GM12878 (cell line): ENCODE measurements at regions of chr3 and their contacts with region 1.

Region 1: DNA sequence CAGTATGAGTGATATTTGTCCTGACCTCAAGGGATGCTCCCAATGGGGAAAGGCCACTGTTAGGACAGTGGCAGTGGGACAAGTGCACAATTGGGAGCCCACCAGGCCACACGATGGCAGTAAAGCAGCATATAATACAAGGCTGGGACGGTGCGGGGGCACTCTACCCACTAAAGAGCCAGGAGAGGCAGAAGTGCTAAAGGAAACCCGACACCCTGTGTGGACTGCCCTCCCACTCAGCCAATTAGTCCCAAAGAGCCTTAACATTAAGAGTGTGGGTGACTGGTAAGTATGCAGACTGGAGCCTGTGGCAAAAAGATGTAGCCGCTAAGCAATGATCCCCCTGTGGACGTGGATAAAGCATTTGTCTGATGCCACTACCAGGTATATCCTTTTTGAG is 8.2 kb upstream of the ZNF589 start:
- DNase-seq: peak; percentile 63
- ATAC-seq: peak; percentile 100
- H3K4me3 ChIP-seq: peak overlapping the region; percentile 6; the same call in 1 of the 2 replicates
- H3K27ac ChIP-seq: peak overlapping the region; percentile 24; the same call in 1 of the 2 replicates
- H3K4me1 ChIP-seq: peaks cover 39% of the 10 kb centered on the region
- H3K27me3 ChIP-seq: no peaks in the 10 kb centered on the region
- CTCF ChIP-seq: peak; percentile 63 to 90 (median 85)
- EP300 ChIP-seq: no peak
- POLR2A ChIP-seq: no peak
- RAD21 ChIP-seq: peak; percentile 68

Region 2: DNA sequence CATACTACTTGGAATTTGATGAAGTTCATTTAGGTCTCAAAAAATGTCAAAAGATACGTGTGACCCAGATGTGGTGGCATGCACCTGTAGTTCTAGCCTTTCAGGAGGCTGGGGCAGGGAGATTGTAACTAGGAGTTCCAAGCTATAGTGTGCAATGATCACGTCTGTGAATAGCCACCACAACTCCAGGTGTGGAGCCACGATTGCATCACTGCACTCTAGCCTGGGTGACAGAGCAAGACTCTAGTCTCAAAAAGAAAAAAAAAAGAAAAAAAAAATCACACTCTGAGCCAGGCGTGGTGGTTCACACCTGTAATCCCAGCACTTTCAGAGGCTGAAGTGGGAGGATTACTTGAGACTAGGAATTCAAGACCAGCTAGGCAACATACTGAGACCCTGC is 230.7 kb before region 1 on chr3:
- CTCF ChIA-PET with region 1: no interaction called
- POLR2A ChIA-PET with region 1: no interaction called
- RAD21 ChIA-PET with region 1: no interaction called
- SMC1A ChIA-PET with region 1: no interaction called
- in situ Hi-C with region 1: no loop called
- intact Hi-C with region 1: no loop called
- DNase-seq: no peak
- ATAC-seq: no peak
- H3K4me3 ChIP-seq: no peak overlapping the region
- H3K27ac ChIP-seq: no peak overlapping the region
- H3K4me1 ChIP-seq: no peaks in the 10 kb centered on the region
- H3K27me3 ChIP-seq: no peaks in the 10 kb centered on the region
- CTCF ChIP-seq: no peak
- EP300 ChIP-seq: no peak
- POLR2A ChIP-seq: no peak
- RAD21 ChIP-seq: no peak

Region 3: GRCh38 chr3:48188266-48189201 is 44.2 kb before region 1 on chr3 and contains the start of gene CDC25A:
- CTCF ChIA-PET with region 1: interaction called, 47 read pairs
- POLR2A ChIA-PET with region 1: no interaction called
- RAD21 ChIA-PET with region 1: interaction called, 6 read pairs
- SMC1A ChIA-PET with region 1: no interaction called
- in situ Hi-C with region 1: no loop called
- intact Hi-C with region 1: loop called (anchors 5 kb)
- DNase-seq: peak; percentile 97
- ATAC-seq: peak; percentile 98
- H3K4me3 ChIP-seq: peak within 1 kb of the TSS; percentile 92
- H3K27ac ChIP-seq: peak within 1 kb of the TSS; percentile 74
- H3K4me1 ChIP-seq: peaks cover 12% of the 10 kb centered on the region; the same call in 1 of the 2 replicates
- H3K27me3 ChIP-seq: no peaks in the 10 kb centered on the region
- CTCF ChIP-seq: no peak
- EP300 ChIP-seq: no peak
- POLR2A ChIP-seq: peak; percentile 82
- RAD21 ChIP-seq: no peak
- polyA plus RNA-seq, gene CDC25A: 2.9 to 5.6 TPM

Region 4: DNA sequence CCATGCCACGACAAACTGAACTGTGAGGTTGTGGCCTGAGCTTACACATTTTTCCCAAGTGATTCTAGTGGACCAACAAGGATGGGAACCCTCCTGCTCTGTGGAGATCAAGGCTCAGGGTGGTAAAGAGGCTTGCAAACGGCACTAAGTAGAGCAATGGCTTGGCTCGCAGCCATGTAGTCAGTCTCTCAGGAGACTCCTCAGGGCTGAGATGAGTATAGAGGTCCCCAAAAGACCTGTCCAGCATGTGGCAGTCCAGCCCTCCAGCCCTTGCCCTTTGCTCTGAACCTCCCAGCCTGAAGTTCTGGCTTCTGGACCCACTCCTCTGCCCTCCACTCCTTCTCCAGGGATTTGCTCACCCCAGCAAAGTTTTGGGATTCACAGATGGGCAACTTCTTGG is 17.7 kb before region 1 on chr3:
- CTCF ChIA-PET with region 1: no interaction called
- POLR2A ChIA-PET with region 1: no interaction called
- RAD21 ChIA-PET with region 1: no interaction called
- SMC1A ChIA-PET with region 1: no interaction called
- in situ Hi-C with region 1: no loop called
- intact Hi-C with region 1: no loop called
- DNase-seq: no peak
- ATAC-seq: no peak
- H3K4me3 ChIP-seq: no peak overlapping the region
- H3K27ac ChIP-seq: no peak overlapping the region
- H3K4me1 ChIP-seq: no peaks in the 10 kb centered on the region
- H3K27me3 ChIP-seq: no peaks in the 10 kb centered on the region; a peak in 1 of 4 replicates
- CTCF ChIP-seq: no peak
- EP300 ChIP-seq: no peak
- POLR2A ChIP-seq: no peak
- RAD21 ChIP-seq: no peak

Region 5: DNA sequence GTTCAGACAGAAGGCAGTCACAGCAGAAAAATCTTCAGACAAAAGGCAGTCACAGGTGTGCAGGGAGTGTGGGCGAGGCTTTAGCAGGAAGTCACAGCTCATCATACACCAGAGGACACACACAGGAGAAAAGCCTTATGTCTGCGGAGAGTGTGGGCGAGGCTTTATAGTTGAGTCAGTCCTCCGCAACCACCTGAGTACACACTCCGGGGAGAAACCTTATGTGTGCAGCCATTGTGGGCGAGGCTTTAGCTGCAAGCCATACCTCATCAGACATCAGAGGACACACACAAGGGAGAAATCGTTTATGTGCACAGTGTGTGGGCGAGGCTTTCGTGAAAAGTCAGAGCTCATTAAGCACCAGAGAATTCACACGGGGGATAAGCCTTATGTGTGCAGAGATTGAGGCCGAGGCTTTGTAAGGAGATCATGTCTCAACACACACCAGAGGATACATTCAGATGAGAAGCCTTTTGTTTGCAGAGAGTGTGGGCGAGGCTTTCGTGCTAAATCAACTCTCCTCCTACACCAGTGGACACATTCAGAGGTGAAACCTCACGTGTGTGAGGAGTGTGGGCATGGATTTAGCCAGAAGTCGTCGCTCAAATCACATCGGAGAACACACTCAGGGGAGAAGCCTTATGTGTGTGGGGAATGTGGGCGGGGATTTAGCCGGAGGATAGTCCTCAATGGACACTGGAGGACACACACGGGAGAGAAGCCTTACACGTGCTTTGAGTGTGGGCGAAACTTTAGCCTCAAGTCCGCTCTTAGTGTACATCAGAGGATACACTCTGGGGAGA is 35.8 kb after region 1 on chr3:
- CTCF ChIA-PET with region 1: interaction called, 4 read pairs
- POLR2A ChIA-PET with region 1: no interaction called
- RAD21 ChIA-PET with region 1: interaction called, 13 read pairs
- SMC1A ChIA-PET with region 1: interaction called, 7 read pairs
- in situ Hi-C with region 1: no loop called
- intact Hi-C with region 1: loop called (anchors 2 kb)
- DNase-seq: peak; percentile 16
- ATAC-seq: no peak
- H3K4me3 ChIP-seq: no peak overlapping the region
- H3K27ac ChIP-seq: no peak overlapping the region
- H3K4me1 ChIP-seq: no peaks in the 10 kb centered on the region
- H3K27me3 ChIP-seq: no peaks in the 10 kb centered on the region
- CTCF ChIP-seq: no peak
- EP300 ChIP-seq: no peak
- POLR2A ChIP-seq: no peak
- RAD21 ChIP-seq: no peak

Region 6: GRCh38 chr3:48273594-48274211 is 41.0 kb after region 1 on chr3:
- CTCF ChIA-PET with region 1: interaction called, 4 read pairs
- POLR2A ChIA-PET with region 1: no interaction called
- RAD21 ChIA-PET with region 1: interaction called, 13 read pairs
- SMC1A ChIA-PET with region 1: interaction called, 7 read pairs
- in situ Hi-C with region 1: no loop called
- intact Hi-C with region 1: loop called (anchors 2 kb)
- DNase-seq: peak; percentile 30
- ATAC-seq: peak; percentile 91
- H3K4me3 ChIP-seq: no peak overlapping the region
- H3K27ac ChIP-seq: no peak overlapping the region
- H3K4me1 ChIP-seq: no peaks in the 10 kb centered on the region
- H3K27me3 ChIP-seq: no peaks in the 10 kb centered on the region
- CTCF ChIP-seq: peak; percentile 73 to 85 (median 76)
- EP300 ChIP-seq: no peak
- POLR2A ChIP-seq: no peak
- RAD21 ChIP-seq: peak; percentile 84

Region 7: GRCh38 chr3:48301020-48301796 is 68.5 kb after region 1 on chr3:
- CTCF ChIA-PET with region 1: interaction called, 3 read pairs
- POLR2A ChIA-PET with region 1: no interaction called
- RAD21 ChIA-PET with region 1: interaction called, 3 read pairs
- SMC1A ChIA-PET with region 1: interaction called, 3 read pairs
- in situ Hi-C with region 1: no loop called
- intact Hi-C with region 1: loop called (anchors 5 kb)
- DNase-seq: peak; percentile 74
- ATAC-seq: peak; percentile 82
- H3K4me3 ChIP-seq: peak within 1 kb of the TSS; percentile 89
- H3K27ac ChIP-seq: peak within 1 kb of the TSS; percentile 95
- H3K4me1 ChIP-seq: peaks cover 12% of the 10 kb centered on the region
- H3K27me3 ChIP-seq: no peaks in the 10 kb centered on the region
- CTCF ChIP-seq: no peak
- EP300 ChIP-seq: no peak
- POLR2A ChIP-seq: peak; percentile 93
- RAD21 ChIP-seq: no peak